Heart right ventricle (tissue), 16 donors: ENCODE measurements at regions of chr1 and their contacts with region 1.

Region 1: GRCh38 chr1:175319418-175320230 is 127.0 kb upstream of the KIAA0040 start:
- DNase-seq: peak; percentile 74 to 85
- ATAC-seq: peak; percentile 83 to 92 (median 88)
- H3K4me3 ChIP-seq: no peak overlapping the region
- H3K27ac ChIP-seq: peak overlapping the region in 7 of 10 donors; percentile 28 to 84 (median 80)
- H3K4me1 ChIP-seq: peaks cover 3 to 31% (median 20%) of the 10 kb centered on the region in 9 donors
- H3K27me3 ChIP-seq: no peaks in the 10 kb centered on the region
- CTCF ChIP-seq: peak; percentile 80 to 94 (median 91)

Region 2: DNA sequence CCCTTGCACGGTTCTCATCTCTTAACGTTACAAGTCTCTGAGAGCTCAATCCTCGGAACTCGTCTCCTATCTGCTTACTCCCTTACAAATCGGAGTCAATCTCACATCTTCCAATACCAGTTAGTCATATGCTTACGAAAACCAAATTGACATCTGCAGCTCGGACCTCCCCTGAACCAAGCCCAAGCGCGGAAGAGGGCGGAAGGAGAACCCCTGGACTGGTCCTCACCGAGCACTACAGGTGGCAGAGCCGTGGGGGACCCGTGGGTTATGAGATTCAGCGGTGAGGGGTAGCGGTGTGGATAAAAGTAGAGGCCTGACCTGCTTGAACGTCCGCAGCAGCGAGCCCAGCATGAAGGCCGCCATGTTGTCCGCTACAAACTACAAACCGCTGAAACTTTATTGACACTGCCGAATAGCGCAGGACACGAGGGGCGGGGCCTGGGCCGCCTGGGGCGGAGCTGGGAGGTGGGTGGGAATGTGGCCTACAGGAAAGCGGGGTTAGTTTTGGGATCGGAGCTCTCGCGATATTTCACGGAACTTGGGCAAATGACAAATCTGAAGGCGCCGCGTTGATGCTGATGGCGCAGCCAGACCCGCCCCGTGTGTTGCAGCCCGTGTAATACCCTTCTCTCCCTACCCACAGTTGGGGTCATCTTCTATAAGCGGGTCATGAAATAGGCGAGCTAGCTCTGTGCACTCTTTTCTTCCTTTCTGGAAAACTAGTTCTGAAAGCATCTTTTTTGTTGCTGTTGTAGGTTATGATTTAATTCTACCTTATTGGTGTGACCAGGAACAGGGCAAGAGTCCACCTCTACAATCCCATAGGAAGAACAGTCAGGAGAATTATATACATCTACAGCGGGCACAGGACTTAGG is 296.3 kb before region 1 on chr1 and contains the start of gene MRPS14:
- intact Hi-C with region 1: loop called in 1 of 10 experiments (anchors 10 kb)
- DNase-seq: peak; percentile 97 to 99
- ATAC-seq: peak; percentile 99 to 100 (median 99)
- H3K4me3 ChIP-seq: peak within 1 kb of the TSS; percentile 69 to 93 (median 82)
- H3K27ac ChIP-seq: peak within 1 kb of the TSS; percentile 26 to 92 (median 79)
- H3K4me1 ChIP-seq: peaks cover 0 to 20% (median 14%) of the 10 kb centered on the region in 9 donors
- H3K27me3 ChIP-seq: no peaks in the 10 kb centered on the region
- CTCF ChIP-seq: no peak
- total RNA-seq, gene MRPS14: 20.2 to 31.5 (median 25.7) TPM

Region 3: GRCh38 chr1:175035865-175036264 is 283.8 kb before region 1 on chr1:
- intact Hi-C with region 1: loop called in 7 of 10 experiments (anchors 5 to 10 kb)
- DNase-seq: no peak
- ATAC-seq: no peak
- H3K4me3 ChIP-seq: no peak overlapping the region
- H3K27ac ChIP-seq: no peak overlapping the region
- H3K4me1 ChIP-seq: no peaks in the 10 kb centered on the region
- H3K27me3 ChIP-seq: no peaks in the 10 kb centered on the region
- CTCF ChIP-seq: no peak

Region 4: DNA sequence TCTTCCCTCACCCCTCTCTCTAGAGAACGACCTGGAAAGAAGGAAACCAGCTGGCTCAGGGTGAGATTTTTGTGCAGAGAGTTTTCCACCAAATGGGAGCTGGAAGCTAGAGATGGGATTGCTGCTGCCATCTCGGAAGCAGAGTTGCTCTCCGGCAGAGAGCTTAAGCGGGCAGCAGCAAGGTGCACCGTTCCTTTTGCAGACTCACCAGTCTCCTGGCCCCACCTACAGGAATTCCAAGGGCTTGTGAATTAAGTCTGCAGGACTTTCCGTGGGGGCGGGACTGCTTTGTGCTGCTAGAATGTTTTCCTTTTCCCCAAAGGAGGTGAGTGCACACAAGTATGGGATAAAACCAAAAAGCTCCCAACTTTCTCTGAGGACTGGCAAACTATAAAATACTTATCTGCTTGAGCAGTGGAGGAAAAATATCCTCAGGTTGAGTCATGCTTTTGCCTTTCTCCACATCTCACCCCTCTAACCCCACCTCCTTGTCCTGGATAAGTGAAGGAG is 97.9 kb before region 1 on chr1:
- intact Hi-C with region 1: loop called in 2 of 10 experiments (anchors 5 to 10 kb)
- DNase-seq: peak in 1 of 2 donors; percentile 43
- ATAC-seq: peak; percentile 48 to 82 (median 66)
- H3K4me3 ChIP-seq: no peak overlapping the region
- H3K27ac ChIP-seq: peak overlapping the region in 7 of 10 donors; percentile 8 to 71 (median 48)
- H3K4me1 ChIP-seq: peaks cover 17 to 48% (median 39%) of the 10 kb centered on the region in 9 donors
- H3K27me3 ChIP-seq: no peaks in the 10 kb centered on the region
- CTCF ChIP-seq: peak in 7 of 9 donors; percentile 29 to 58 (median 41)

Region 5: DNA sequence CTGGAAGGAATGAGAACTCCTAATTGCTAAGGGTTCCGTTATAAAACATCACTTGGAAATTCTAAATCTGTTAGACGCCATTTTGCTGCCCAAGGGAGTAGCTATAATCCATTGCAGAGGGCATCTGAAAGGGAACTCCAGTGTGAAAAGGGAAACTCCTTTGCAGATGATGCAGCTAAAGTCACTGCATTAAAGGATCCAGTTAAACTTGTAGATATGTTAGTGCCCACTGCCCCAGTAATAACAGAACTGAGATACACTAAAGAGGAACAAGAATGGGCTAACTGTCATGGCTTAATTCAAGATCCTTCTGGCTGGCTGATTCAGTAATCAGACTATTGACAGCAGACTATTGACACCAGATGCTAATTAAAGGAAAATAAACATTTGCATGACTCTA is 45.3 kb before region 1 on chr1:
- intact Hi-C with region 1: loop called in 3 of 10 experiments (anchors 5 kb)
- DNase-seq: no peak
- ATAC-seq: no peak
- H3K4me3 ChIP-seq: no peak overlapping the region
- H3K27ac ChIP-seq: no peak overlapping the region
- H3K4me1 ChIP-seq: peaks cover 0 to 36% (median 12%) of the 10 kb centered on the region in 9 donors
- H3K27me3 ChIP-seq: no peaks in the 10 kb centered on the region
- CTCF ChIP-seq: no peak

Region 6: DNA sequence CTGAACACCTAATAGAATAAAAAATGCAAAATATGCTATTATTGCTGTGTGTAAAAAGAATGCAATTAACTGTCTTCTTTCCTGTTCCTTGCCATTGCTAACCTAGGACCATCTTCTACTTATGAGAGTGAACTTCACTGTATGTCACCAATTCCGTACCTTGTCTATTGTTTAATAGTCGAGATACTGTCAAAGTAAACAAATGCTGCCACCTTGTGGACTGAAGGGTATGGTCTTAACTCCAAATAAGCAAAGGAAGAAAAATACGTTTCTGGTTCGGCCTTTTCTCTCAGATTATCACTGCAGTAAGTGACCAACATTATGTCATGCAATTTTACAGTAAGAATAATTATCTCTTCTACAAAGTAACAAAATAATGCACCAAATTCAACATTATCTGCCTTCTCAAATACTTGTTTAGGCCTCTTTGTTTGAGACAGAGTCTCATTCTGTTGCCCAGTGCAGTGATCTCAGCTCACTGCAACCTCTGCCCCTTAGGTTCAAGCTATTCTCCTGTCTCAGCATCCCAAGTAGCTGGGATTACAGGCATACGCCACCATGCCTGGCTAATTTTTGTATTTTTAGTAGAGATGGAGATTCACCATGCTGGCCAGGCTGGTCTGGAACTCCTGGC is 754.0 kb after region 1 on chr1:
- intact Hi-C with region 1: loop called in 1 of 10 experiments (anchors 5 kb)
- DNase-seq: peak in 1 of 2 donors; percentile 67
- ATAC-seq: peak in 7 of 8 donors; percentile 38 to 72 (median 68)
- H3K4me3 ChIP-seq: no peak overlapping the region
- H3K27ac ChIP-seq: no peak overlapping the region
- H3K4me1 ChIP-seq: peaks cover 0 to 6% (median 0%) of the 10 kb centered on the region in 9 donors
- H3K27me3 ChIP-seq: no peaks in the 10 kb centered on the region
- CTCF ChIP-seq: peak; percentile 45 to 86 (median 78)